Naive thymus-derived CD4-positive, alpha-beta T cell (primary cell): ENCODE measurements at regions of chr1 and their contacts with region 1.

Region 1: GRCh38 chr1:27321813-27322577 is at the start of gene TMEM222:
- DNase-seq: peak; percentile 94 to 99 (median 97)
- ATAC-seq: peak; percentile 98
- H3K4me3 ChIP-seq: peak within 1 kb of the TSS; percentile 91
- H3K4me3 Mint-ChIP-seq: peak within 1 kb of the TSS; percentile 91 to 99 (median 96)
- H3K27ac ChIP-seq: peak within 1 kb of the TSS; percentile 95
- H3K27ac Mint-ChIP-seq: peak within 1 kb of the TSS; percentile 88 to 97 (median 93)
- H3K4me1 ChIP-seq: peaks cover 18 to 22% of the 10 kb centered on the region in 2 donors
- H3K4me1 Mint-ChIP-seq: peaks cover 22 to 59% (median 54%) of the 10 kb centered on the region in 7 donors
- H3K27me3 ChIP-seq: no peaks in the 10 kb centered on the region
- H3K27me3 Mint-ChIP-seq: peaks cover 0 to 5% (median 3%) of the 10 kb centered on the region in 5 donors
- total RNA-seq, gene TMEM222: 23.7 to 44.0 (median 41.9) TPM

Region 2: GRCh38 chr1:27234049-27234882 is 87.7 kb before region 1 on chr1 and contains the start of gene WDTC1:
- CTCF ChIA-PET with region 1: no interaction called
- POLR2A ChIA-PET with region 1: no interaction called
- intact Hi-C with region 1: loop called (anchors 1 kb)
- DNase-seq: peak; percentile 91 to 98 (median 97)
- ATAC-seq: peak; percentile 96
- H3K4me3 ChIP-seq: peak within 1 kb of the TSS; percentile 78
- H3K4me3 Mint-ChIP-seq: peak within 1 kb of the TSS; percentile 95 to 100 (median 98)
- H3K27ac ChIP-seq: peak within 1 kb of the TSS; percentile 78
- H3K27ac Mint-ChIP-seq: peak within 1 kb of the TSS; percentile 83 to 97 (median 96)
- H3K4me1 ChIP-seq: peaks cover 18 to 25% of the 10 kb centered on the region in 2 donors
- H3K4me1 Mint-ChIP-seq: peaks cover 25 to 39% (median 35%) of the 10 kb centered on the region in 7 donors
- H3K27me3 ChIP-seq: no peaks in the 10 kb centered on the region
- H3K27me3 Mint-ChIP-seq: peaks cover 0 to 3% (median 0%) of the 10 kb centered on the region in 5 donors
- total RNA-seq, gene WDTC1: 33.2 to 59.0 (median 46.3) TPM

Region 3: GRCh38 chr1:27332536-27333281 is 10.7 kb after region 1 on chr1:
- CTCF ChIA-PET with region 1: interaction called, 10 read pairs
- POLR2A ChIA-PET with region 1: interaction called, 6 read pairs
- intact Hi-C with region 1: no loop called
- DNase-seq: peak in 8 of 9 donors; percentile 49 to 71 (median 56)
- ATAC-seq: peak; percentile 90
- H3K4me3 ChIP-seq: no peak overlapping the region
- H3K4me3 Mint-ChIP-seq: no peak overlapping the region
- H3K27ac ChIP-seq: no peak overlapping the region
- H3K27ac Mint-ChIP-seq: peak overlapping the region in 5 of 9 donors; percentile 21 to 67 (median 50)
- H3K4me1 ChIP-seq: peaks cover 7 to 11% of the 10 kb centered on the region in 2 donors
- H3K4me1 Mint-ChIP-seq: peaks cover 29 to 51% (median 44%) of the 10 kb centered on the region in 7 donors
- H3K27me3 ChIP-seq: no peaks in the 10 kb centered on the region
- H3K27me3 Mint-ChIP-seq: no peaks in the 10 kb centered on the region

Region 4: GRCh38 chr1:27357281-27358037 is 35.5 kb after region 1 on chr1:
- CTCF ChIA-PET with region 1: interaction called, 9 read pairs
- POLR2A ChIA-PET with region 1: interaction called, 9 read pairs
- intact Hi-C with region 1: loop called in 1 of 2 experiments (anchors 1 kb)
- DNase-seq: peak; percentile 76 to 89 (median 85)
- ATAC-seq: peak; percentile 94
- H3K4me3 ChIP-seq: peak overlapping the region; percentile 76
- H3K4me3 Mint-ChIP-seq: peak overlapping the region; percentile 74 to 88 (median 80)
- H3K27ac ChIP-seq: peak overlapping the region; percentile 70
- H3K27ac Mint-ChIP-seq: peak overlapping the region; percentile 62 to 90 (median 88)
- H3K4me1 ChIP-seq: peaks cover 37 to 41% of the 10 kb centered on the region in 2 donors
- H3K4me1 Mint-ChIP-seq: peaks cover 23 to 56% (median 45%) of the 10 kb centered on the region in 7 donors
- H3K27me3 ChIP-seq: no peaks in the 10 kb centered on the region
- H3K27me3 Mint-ChIP-seq: no peaks in the 10 kb centered on the region

Region 5: DNA sequence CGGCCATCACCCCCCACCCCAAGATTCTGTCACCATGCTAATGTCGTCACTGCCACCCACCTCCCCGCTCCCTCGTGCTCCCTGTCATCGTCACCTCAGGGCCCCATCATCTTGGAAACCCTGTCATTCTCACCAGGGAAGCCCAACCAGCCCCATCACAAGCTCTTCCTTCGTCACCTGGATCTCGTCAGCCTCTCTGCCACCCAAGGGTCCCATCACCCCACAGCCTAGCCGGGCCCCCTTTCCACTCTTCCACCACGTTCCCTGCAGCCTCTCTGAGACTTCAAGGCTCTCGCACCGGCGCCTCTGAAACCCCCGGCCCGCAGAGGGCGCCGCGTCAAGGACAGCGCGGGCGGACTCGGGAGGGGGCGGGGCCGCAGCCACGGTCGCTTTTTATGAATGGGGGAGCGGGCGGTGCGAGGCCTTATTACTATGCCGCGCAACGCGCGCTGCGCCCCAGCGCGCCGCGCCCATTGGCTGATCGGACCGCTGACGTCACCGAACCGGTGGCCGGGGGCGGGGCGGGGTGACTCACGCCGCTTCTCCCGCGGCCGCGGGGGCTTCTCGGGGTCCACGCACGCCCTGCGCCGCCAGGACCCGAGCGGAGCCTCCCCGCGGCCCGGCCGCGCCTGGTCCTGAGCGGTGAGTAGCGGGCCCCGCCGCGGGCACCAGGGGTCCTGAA is 70.2 kb after region 1 on chr1 and contains the start of gene GPR3:
- CTCF ChIA-PET with region 1: interaction called, 8 read pairs
- POLR2A ChIA-PET with region 1: interaction called, 3 read pairs
- intact Hi-C with region 1: loop called in 1 of 2 experiments (anchors 1 kb)
- DNase-seq: peak; percentile 82 to 95 (median 88)
- ATAC-seq: peak; percentile 97
- H3K4me3 ChIP-seq: peak within 1 kb of the TSS; percentile 57
- H3K4me3 Mint-ChIP-seq: peak within 1 kb of the TSS; percentile 76 to 90 (median 83)
- H3K27ac ChIP-seq: peak within 1 kb of the TSS; percentile 64
- H3K27ac Mint-ChIP-seq: peak within 1 kb of the TSS; percentile 54 to 98 (median 84)
- H3K4me1 ChIP-seq: peaks cover 9 to 18% of the 10 kb centered on the region in 2 donors
- H3K4me1 Mint-ChIP-seq: peaks cover 12 to 27% (median 20%) of the 10 kb centered on the region in 7 donors
- H3K27me3 ChIP-seq: no peaks in the 10 kb centered on the region
- H3K27me3 Mint-ChIP-seq: peaks cover 0 to 16% (median 0%) of the 10 kb centered on the region in 5 donors
- total RNA-seq, gene GPR3: 0.24 to 0.93 (median 0.45) TPM in 3 of 5 experiments, not detected in the others

Region 6: DNA sequence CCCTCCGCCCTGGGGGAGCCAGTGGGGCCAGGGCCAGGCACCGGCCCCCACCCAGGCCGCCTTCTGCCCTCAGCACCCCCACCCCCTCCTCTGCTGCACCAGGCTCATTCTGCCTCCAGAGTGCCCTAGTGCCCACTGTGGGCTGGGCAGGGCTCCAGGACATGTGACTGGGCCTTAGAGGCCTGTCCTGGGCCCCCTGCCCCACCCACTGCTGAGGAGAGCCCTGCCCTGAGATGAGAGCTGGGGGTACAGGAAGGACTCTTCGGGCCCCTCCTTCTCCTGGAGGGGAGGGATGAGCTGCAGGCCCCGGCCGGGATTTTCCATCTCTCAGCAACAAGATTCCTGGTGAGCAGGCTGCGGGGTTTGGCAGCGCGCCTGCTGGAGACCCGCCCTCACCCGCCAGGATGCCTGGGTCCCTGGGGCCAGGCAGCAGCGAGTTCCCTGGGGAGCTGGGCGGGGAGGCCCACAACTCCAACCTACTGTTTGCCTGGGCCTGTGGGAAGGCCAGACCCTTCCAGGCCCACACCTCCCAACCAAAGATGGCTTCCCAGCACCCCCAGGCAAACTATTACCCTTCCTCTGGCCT is 267.9 kb after region 1 on chr1:
- CTCF ChIA-PET with region 1: no interaction called
- POLR2A ChIA-PET with region 1: no interaction called
- intact Hi-C with region 1: no loop called
- DNase-seq: no peak
- ATAC-seq: no peak
- H3K4me3 ChIP-seq: no peak overlapping the region
- H3K4me3 Mint-ChIP-seq: no peak overlapping the region
- H3K27ac ChIP-seq: no peak overlapping the region
- H3K27ac Mint-ChIP-seq: no peak overlapping the region
- H3K4me1 ChIP-seq: peaks cover 0 to under 1% of the 10 kb centered on the region in 2 donors
- H3K4me1 Mint-ChIP-seq: peaks cover 0 to 8% (median 0%) of the 10 kb centered on the region in 7 donors
- H3K27me3 ChIP-seq: no peaks in the 10 kb centered on the region
- H3K27me3 Mint-ChIP-seq: no peaks in the 10 kb centered on the region

Region 7: GRCh38 chr1:27725374-27726173 is 403.6 kb after region 1 on chr1 and contains the start of gene FAM76A:
- CTCF ChIA-PET with region 1: no interaction called
- POLR2A ChIA-PET with region 1: no interaction called
- intact Hi-C with region 1: loop called in 1 of 2 experiments (anchors 1 kb)
- DNase-seq: peak; percentile 97 to 100 (median 99)
- ATAC-seq: peak; percentile 97
- H3K4me3 ChIP-seq: peak within 1 kb of the TSS; percentile 77
- H3K4me3 Mint-ChIP-seq: peak within 1 kb of the TSS; percentile 86 to 93 (median 90)
- H3K27ac ChIP-seq: peak within 1 kb of the TSS; percentile 91
- H3K27ac Mint-ChIP-seq: peak within 1 kb of the TSS; percentile 93 to 100 (median 98)
- H3K4me1 ChIP-seq: peaks cover 7 to 17% of the 10 kb centered on the region in 2 donors
- H3K4me1 Mint-ChIP-seq: peaks cover 9 to 35% (median 28%) of the 10 kb centered on the region in 7 donors
- H3K27me3 ChIP-seq: no peaks in the 10 kb centered on the region
- H3K27me3 Mint-ChIP-seq: no peaks in the 10 kb centered on the region
- total RNA-seq, gene FAM76A: 15.2 to 25.2 (median 22.2) TPM